GM13977 (cell line): ENCODE measurements at regions of chrX and their contacts with region 1.

Region 1: GRCh38 chrX:43002526-43003203 is 224.7 kb upstream of the PPP1R2C start:
- DNase-seq: peak; percentile 3
- CTCF ChIP-seq: no peak

Region 2: GRCh38 chrX:42943051-42943974 is 59.4 kb before region 1 on chrX:
- in situ Hi-C with region 1: loop called (anchors 10 kb)
- DNase-seq: no peak
- CTCF ChIP-seq: no peak

Region 3: DNA sequence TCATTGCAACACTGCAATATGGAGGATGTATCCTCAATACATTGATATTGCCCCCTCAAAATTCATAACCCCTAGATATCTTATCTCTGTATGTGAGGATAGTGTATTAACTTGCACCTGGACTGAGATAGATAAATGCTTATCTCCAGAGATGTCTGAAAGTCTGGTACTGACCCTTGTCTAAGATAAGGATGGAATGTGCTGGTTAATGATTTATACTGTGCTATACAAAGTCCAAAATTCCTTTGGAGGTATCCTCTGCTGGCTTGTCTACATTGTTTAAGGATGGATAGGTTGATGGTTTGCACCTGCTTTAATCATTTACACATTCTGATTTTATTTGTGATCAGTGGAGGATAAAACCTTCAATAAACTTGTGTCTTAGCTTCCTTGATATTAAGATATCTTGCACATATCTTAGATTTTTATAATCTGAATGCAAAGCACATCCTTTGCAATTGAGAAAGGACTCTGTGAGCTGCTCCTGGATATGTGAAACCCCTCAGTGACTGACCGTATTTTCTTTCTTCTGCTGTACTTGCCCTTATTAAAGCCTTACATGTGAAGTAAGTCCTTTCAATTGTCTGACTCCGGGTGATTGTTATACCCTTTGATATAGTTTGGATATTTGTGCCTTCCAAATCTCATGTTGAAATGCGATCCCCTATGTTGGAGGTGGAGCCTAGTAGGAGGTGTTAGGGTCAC is 223.1 kb after region 1 on chrX:
- in situ Hi-C with region 1: no loop called
- DNase-seq: no peak
- CTCF ChIP-seq: no peak